ENCODE measurements at regions of chr16 and their contacts with region 1.

Region 1: DNA sequence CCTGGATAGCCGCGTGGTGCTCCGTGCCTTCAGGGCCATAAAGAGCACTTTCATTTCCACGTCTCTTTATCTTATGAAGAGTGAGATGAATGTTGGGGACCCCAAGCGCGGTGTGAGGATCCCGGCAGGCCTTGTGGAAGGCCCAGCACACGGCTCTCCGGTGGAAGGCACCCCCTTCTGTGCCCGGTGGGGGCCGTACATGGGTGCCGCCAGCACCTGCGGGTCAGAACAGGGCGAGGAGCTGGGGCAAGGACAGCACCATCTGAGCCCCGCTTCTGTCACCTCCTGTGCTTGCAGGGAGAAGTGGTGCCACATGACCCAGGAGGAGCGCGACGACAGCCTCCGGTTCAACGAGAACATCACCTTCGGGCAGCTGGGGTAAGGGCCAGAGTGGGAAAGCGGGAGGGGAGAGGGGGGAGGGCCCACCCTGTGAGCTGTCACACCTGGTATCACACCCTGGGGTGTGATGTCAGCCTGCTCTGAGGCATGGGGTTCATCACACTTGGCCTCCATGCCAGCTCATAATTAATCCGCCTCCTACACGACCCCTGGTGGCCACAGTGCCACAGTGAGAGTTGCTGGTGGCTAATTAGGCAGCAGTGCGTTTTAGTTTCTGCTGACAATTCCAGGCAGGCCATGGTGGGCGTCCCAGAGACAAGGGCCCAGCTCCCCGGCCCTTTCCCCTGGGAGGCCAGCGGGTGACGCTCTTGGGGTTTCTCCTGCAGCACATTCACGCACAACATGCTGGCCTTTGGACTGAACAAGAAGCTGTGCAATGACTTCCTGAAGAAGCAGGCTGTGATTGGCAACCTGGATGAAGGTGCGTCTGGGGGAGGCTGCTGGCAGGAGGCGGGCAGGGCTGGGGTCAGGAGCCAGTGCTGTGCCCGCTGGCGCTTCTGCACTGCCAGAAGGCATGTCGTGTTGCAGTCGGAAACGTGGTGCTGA is 25.7 kb downstream of the CIBAR2 start:
- DNase-seq: peak; percentile 86
- ATAC-seq: peak; percentile 95
- H3K4me3 Mint-ChIP-seq: no peak overlapping the region
- H3K27ac Mint-ChIP-seq: no peak overlapping the region
- H3K4me1 Mint-ChIP-seq: peaks cover 32% of the 10 kb centered on the region
- H3K27me3 Mint-ChIP-seq: no peaks in the 10 kb centered on the region

Region 2: GRCh38 chr16:84532291-84532724 is 554.3 kb before region 1 on chr16:
- CTCF ChIA-PET with region 1: no interaction called
- POLR2A ChIA-PET with region 1: no interaction called
- intact Hi-C with region 1: no loop called
- DNase-seq: no peak
- ATAC-seq: no peak
- H3K4me3 Mint-ChIP-seq: no peak overlapping the region
- H3K27ac Mint-ChIP-seq: no peak overlapping the region
- H3K4me1 Mint-ChIP-seq: peaks cover 4% of the 10 kb centered on the region
- H3K27me3 Mint-ChIP-seq: no peaks in the 10 kb centered on the region

Region 3: DNA sequence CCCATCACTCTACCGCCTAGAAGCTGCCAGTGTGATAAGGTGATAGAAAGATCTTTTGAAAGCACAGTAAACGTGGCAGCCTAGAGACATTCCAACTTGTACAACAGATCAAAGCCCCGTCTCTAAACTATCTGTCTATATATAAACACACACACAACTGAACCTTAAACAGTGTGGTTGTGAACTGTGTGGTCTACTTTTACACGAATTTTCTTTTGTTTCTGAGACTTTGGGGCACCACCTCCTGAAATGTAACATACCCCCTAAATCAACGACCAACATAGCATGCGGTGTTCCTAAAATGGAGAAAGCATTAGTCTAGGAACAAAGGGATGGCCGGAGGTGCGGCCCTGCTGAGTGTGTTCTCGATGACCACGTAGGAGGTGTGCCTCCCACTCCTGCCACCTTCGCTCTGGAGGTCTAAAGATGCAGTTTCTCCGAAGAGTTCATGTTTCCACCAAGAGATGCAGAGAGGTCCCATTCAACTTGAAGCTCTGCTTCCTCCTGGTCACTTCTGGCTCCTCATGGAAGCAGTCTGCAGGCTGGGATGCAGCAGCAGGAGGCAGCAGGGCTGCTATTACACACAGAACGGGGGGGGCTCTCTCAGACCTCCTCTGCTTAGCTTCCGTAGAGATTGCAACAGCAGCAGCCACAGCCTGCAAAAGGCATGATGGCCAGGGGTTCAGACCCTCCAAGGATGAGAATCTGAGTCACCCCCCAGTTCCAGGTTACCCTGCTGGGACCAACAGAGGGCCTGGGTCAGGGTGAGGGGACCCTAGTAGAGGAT is 409.4 kb before region 1 on chr16:
- CTCF ChIA-PET with region 1: no interaction called
- POLR2A ChIA-PET with region 1: no interaction called
- intact Hi-C with region 1: no loop called
- DNase-seq: no peak
- ATAC-seq: no peak
- H3K4me3 Mint-ChIP-seq: no peak overlapping the region
- H3K27ac Mint-ChIP-seq: no peak overlapping the region
- H3K4me1 Mint-ChIP-seq: peaks cover 3% of the 10 kb centered on the region
- H3K27me3 Mint-ChIP-seq: no peaks in the 10 kb centered on the region

Region 4: GRCh38 chr16:84829168-84829965 is 257.3 kb before region 1 on chr16:
- CTCF ChIA-PET with region 1: no interaction called
- POLR2A ChIA-PET with region 1: no interaction called
- intact Hi-C with region 1: no loop called
- DNase-seq: no peak
- ATAC-seq: no peak
- H3K4me3 Mint-ChIP-seq: no peak overlapping the region
- H3K27ac Mint-ChIP-seq: no peak overlapping the region
- H3K4me1 Mint-ChIP-seq: no peaks in the 10 kb centered on the region
- H3K27me3 Mint-ChIP-seq: peaks cover 5% of the 10 kb centered on the region

Region 5: DNA sequence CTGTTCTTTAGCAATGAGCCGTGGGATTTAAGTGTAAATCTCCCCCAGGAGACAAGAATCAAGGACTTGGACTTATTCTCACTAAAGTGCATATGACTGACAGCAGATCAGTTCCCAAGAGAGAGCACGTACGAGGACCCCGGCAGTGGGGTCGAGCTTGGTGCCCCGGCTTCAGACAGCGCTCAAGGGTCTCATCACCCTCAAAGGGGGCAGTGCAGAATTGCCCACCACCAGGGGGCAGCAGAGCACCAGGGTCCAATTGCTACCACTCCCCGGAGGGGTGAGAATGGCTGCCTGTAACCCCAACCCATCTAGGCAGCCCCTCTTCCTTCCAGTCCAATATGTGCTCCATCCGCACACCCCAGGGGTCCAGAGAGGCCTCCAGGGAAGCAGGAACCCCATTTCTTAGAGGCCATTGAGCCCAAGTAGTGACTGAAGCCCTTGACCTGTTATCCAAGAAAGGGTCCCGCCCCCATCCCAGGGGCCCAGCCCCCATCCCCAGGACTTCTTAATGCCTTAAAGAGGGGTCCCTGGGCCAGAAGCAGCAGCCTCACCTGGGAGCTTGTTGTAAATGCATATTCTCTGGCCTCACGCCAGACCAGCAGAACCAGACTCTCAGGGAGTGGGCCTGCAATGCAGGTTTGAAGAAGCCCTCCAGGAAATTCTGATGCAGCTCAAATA is 161.4 kb before region 1 on chr16:
- CTCF ChIA-PET with region 1: interaction called, 5 read pairs
- POLR2A ChIA-PET with region 1: no interaction called
- intact Hi-C with region 1: loop called in 1 of 2 experiments (anchors 2 kb)
- DNase-seq: peak; percentile 86
- ATAC-seq: peak; percentile 77
- H3K4me3 Mint-ChIP-seq: no peak overlapping the region
- H3K27ac Mint-ChIP-seq: no peak overlapping the region
- H3K4me1 Mint-ChIP-seq: no peaks in the 10 kb centered on the region
- H3K27me3 Mint-ChIP-seq: no peaks in the 10 kb centered on the region

Region 6: GRCh38 chr16:84985079-84986065 is 101.2 kb before region 1 on chr16:
- CTCF ChIA-PET with region 1: no interaction called
- POLR2A ChIA-PET with region 1: no interaction called
- intact Hi-C with region 1: loop called in 1 of 2 experiments (anchors 10 kb)
- DNase-seq: no peak
- ATAC-seq: no peak
- H3K4me3 Mint-ChIP-seq: peak overlapping the region; percentile 21
- H3K27ac Mint-ChIP-seq: peak overlapping the region; percentile 72
- H3K4me1 Mint-ChIP-seq: peaks cover 20% of the 10 kb centered on the region
- H3K27me3 Mint-ChIP-seq: no peaks in the 10 kb centered on the region

Region 7: DNA sequence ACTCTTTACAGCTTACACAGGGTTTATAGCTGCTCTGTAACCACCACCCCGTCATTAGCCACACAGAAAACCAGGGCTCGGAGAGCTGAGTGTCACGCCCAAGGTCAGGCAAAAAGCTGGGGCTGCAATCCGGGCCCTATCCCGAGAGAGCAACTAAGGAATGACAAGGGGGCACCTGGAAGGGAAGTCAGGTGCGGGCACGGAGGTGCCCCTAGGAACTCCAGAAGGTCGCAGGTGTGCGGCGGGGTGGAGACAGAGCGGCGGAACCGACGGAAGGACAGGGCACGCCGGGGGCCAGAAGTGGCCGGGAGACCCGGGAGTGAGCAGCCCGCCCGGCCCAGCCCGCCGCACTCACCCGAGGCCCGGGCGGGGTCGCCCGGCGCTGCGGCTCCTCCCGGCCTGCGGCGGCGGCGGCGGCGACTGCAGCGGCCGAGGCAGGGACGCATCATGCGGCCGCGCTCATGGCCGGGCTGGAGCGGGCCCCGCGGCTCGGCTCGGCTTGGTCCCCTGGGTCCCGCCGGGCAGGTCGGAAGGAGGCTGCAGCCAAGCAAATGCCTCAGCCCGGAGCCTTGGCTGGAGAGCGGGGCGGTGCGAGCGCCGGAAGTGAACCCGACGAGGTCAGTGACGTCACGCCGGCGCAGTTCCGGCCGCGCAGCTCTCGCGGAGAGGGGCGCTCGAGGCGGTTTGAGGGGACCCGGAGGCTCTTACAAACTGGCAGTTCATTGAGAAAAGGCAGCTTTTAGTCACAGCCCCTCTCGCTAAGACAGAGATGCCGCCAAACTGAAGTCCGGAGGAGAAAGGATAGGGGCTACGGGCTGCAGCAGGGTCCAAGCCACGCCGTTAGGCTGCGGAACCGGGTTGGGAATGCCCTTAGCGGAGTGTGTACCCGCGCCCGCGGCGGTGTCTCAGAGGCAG is 75.4 kb before region 1 on chr16 and contains the start of gene ZDHHC7:
- CTCF ChIA-PET with region 1: interaction called, 16 read pairs
- POLR2A ChIA-PET with region 1: interaction called, 4 read pairs
- intact Hi-C with region 1: loop called (anchors 1 kb)
- DNase-seq: peak; percentile 92
- ATAC-seq: peak; percentile 95
- H3K4me3 Mint-ChIP-seq: peak within 1 kb of the TSS; percentile 89
- H3K27ac Mint-ChIP-seq: peak within 1 kb of the TSS; percentile 98
- H3K4me1 Mint-ChIP-seq: peaks cover 30% of the 10 kb centered on the region
- H3K27me3 Mint-ChIP-seq: no peaks in the 10 kb centered on the region
- total RNA-seq, gene ZDHHC7: 25.1 to 27.8 TPM

Region 8: GRCh38 chr16:85055503-85056210 is 31.0 kb before region 1 on chr16:
- CTCF ChIA-PET with region 1: interaction called, 7 read pairs
- POLR2A ChIA-PET with region 1: interaction called, 3 read pairs
- intact Hi-C with region 1: loop called (anchors 1 to 2 kb)
- DNase-seq: peak; percentile 88
- ATAC-seq: peak; percentile 92
- H3K4me3 Mint-ChIP-seq: peak overlapping the region; percentile 61
- H3K27ac Mint-ChIP-seq: peak overlapping the region; percentile 88
- H3K4me1 Mint-ChIP-seq: peaks cover 57% of the 10 kb centered on the region
- H3K27me3 Mint-ChIP-seq: no peaks in the 10 kb centered on the region

Region 9: DNA sequence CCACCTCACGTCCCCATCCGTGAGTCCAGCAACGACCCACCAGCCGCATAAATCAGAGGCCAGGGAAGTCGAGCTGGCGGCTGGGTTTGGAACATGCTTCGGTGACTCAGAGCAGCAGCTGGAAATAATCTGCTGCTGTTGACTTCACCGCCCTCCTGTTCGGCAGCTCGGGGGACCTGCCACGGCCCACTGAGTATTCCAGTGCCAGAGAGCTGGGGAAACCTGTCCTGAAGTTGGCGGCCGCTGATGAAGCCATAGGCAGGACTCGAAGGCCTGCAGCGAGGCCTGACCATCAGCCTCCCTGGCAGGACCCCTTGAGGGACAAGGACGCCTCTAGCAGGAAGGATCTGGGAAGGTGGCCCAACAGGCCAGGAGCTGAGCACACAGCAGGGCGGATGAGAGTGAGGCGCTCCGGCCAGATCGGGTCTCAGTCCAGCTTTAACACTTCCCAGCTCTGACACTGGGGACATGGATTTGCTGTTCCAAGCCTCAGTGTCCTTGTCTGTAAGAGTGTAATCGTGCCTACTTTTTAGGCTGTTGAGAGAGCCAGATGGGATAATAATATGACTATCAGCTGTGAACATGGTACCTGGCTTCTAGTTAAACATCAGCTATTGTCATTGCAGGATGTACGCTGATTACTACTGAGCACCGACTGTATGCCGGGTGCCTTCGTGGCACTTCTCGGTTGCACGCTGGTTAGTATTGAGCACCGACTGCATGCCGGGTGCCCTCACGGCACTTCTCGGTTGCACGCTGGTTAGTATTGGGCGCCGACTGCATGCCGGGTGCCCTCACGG is 76.1 kb after region 1 on chr16:
- CTCF ChIA-PET with region 1: no interaction called
- POLR2A ChIA-PET with region 1: no interaction called
- intact Hi-C with region 1: no loop called
- DNase-seq: no peak
- ATAC-seq: no peak
- H3K4me3 Mint-ChIP-seq: no peak overlapping the region
- H3K27ac Mint-ChIP-seq: no peak overlapping the region
- H3K4me1 Mint-ChIP-seq: peaks cover 6% of the 10 kb centered on the region
- H3K27me3 Mint-ChIP-seq: peaks cover 5% of the 10 kb centered on the region